ENCODE measurements at regions of chr17 and their contacts with region 1.

Region 1: DNA sequence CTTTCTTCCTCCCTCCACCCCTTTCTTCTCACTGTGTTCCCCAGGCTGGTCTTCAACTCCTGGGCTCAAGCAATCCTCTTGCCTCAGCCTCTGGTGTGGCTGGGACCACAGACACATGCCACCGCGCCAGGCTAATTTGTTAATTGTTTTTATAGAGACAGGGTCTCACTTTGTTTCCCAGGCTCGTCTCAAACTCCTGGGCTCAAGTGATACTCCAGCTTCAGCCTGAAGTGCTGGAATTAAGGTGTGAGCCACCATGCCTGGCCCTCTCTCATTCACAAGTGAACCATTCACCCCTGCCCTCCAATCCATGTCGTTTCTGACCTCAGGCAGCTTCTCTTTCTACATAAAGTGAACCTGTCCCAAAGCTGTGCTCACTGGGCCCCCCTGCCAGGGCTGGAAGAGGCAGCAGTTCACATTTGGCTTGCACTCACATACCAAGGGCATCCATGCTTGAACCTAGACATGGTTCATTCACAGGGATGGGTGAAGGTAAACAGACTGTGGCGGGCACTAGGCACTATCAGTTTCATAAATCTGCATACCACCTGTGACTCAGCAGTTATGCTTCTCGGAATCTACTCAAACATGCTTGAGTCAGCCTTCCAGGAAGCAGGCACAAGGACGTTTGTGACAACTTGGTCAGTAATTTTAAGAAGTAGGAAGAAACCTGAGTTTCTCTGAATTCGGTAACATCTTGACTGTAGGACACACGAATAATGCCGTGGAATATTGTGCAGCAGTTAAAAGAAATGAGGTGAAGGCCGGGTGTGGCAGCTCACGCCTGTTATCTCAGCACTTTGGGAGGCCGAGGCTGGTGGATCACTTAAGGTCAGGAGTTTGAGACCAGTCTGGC is 6.0 kb upstream of the RNF213 start:
- DNase-seq: peak; percentile 83 to 96
- H3K4me3 ChIP-seq: peak overlapping the region; percentile 38; the same call in 1 of the 2 replicates
- H3K27ac ChIP-seq: peak overlapping the region; percentile 94
- H3K4me1 ChIP-seq: peaks cover 41% of the 10 kb centered on the region
- H3K27me3 ChIP-seq: no peaks in the 10 kb centered on the region
- CTCF ChIP-seq: no peak

Region 2: DNA sequence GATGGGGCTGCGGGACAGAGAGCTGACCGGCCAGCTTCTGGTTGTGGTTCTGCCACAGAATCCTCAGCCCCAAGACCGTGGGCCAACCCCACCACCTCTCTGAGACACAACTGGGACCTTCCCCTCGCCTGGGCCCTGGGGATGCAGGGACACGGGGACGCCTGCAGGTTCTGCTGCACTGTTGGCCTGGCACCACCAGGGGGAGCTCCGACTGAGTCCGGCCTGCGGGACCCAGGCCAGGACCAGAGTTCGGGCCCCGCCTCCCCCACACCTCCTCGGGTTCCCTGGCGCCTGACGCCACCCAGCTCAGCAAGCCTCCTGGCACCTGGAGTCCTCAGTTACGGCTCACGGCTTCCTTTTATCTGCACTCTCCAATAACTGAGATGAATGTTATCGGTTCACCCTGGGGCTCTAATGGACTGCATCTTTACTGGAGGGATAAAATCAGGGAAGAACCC is 246.2 kb before region 1 on chr17:
- CTCF ChIA-PET with region 1: no interaction called
- POLR2A ChIA-PET with region 1: no interaction called
- intact Hi-C with region 1: loop called (anchors 5 kb)
- DNase-seq: peak; percentile 40 to 83
- H3K4me3 ChIP-seq: no peak overlapping the region
- H3K27ac ChIP-seq: no peak overlapping the region
- H3K4me1 ChIP-seq: no peaks in the 10 kb centered on the region
- H3K27me3 ChIP-seq: no peaks in the 10 kb centered on the region
- CTCF ChIP-seq: peak; percentile 86

Region 3: GRCh38 chr17:80082403-80083135 is 172.1 kb before region 1 on chr17:
- CTCF ChIA-PET with region 1: no interaction called
- POLR2A ChIA-PET with region 1: no interaction called
- intact Hi-C with region 1: loop called (anchors 2 kb)
- DNase-seq: peak in 1 of 2 experiments; percentile 65
- H3K4me3 ChIP-seq: no peak overlapping the region
- H3K27ac ChIP-seq: no peak overlapping the region
- H3K4me1 ChIP-seq: no peaks in the 10 kb centered on the region
- H3K27me3 ChIP-seq: peaks cover 10% of the 10 kb centered on the region; the same call in 1 of the 2 replicates
- CTCF ChIP-seq: peak; percentile 78

Region 4: DNA sequence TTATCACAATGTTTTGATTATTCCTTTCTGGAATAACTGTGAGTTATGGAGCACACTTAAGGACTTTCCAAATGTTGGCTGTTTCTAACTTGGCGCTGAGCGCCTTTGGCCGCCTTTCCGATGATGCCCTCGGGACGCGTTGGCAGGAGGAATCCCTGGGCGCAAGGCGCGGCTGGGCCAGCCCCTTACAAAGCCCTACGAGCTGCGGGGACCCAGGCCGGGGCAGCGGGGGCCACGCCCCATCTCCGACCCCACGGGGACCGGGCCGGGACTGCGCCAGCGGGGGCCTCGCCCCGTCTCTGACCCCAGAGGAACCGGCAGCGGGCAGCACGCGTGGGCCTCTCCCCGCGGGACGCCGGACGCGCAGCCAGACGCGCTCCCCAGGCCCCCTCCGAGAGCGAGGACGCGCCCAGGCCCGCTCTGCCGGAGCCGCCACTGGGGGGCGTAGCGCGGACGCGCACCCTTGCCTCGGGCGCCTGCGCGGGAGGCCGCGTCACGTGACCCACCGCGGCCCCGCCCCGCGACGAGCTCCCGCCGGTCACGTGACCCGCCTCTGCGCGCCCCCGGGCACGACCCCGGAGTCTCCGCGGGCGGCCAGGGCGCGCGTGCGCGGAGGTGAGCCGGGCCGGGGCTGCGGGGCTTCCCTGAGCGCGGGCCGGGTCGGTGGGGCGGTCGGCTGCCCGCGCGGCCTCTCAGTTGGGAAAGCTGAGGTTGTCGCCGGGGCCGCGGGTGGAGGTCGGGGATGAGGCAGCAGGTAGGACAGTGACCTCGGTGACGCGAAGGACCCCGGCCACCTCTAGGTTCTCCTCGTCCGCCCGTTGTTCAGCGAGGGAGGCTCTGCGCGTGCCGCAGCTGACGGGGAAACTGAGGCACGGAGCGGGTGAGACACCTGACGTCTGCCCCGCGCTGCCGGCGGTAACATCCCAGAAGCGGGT is 153.3 kb before region 1 on chr17 and contains the start of gene GAA:
- CTCF ChIA-PET with region 1: no interaction called
- POLR2A ChIA-PET with region 1: no interaction called
- intact Hi-C with region 1: loop called (anchors 1 kb)
- DNase-seq: peak; percentile 36 to 89
- H3K4me3 ChIP-seq: peak within 1 kb of the TSS; percentile 82
- H3K27ac ChIP-seq: no peak within 1 kb of the TSS
- H3K4me1 ChIP-seq: no peaks in the 10 kb centered on the region
- H3K27me3 ChIP-seq: no peaks in the 10 kb centered on the region
- CTCF ChIP-seq: peak; percentile 61; the same call in 1 of the 2 replicates
- total RNA-seq, gene GAA: 86.9 and 126 TPM in 2 replicates

Region 5: DNA sequence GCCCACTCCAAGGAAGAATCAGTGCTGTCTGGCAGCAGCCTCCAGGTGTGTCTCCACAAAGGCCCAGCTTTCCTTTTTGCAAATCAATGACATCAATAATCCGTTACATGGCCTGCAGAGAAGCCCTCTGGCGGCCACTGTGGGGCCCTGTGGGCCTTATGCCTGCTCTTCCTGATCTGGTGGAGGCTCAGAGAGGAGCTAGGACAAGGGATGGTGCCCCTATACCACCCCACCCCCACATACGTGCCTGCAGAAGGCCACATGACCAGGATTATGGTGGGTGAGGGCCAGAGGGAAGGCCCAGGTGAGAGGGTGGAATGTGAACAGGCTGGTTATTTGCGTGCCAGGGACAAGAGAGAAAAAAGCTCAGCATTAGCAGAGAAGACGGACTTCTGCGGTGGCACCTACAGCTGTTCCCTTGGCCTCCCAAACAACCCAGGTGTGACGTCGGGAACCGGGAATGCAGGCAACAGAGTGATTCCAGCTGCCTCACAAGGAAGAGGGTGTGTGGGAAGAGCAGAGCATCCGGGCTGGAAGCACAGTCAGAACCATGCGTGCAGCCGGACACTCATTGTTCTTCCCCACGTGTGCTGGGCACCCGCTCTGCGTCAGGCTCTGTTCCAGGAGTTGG is 130.2 kb before region 1 on chr17:
- CTCF ChIA-PET with region 1: no interaction called
- POLR2A ChIA-PET with region 1: no interaction called
- intact Hi-C with region 1: loop called (anchors 2 kb)
- DNase-seq: peak; percentile 41 to 89
- H3K4me3 ChIP-seq: no peak overlapping the region
- H3K27ac ChIP-seq: no peak overlapping the region
- H3K4me1 ChIP-seq: no peaks in the 10 kb centered on the region
- H3K27me3 ChIP-seq: no peaks in the 10 kb centered on the region
- CTCF ChIP-seq: 0 out of 2 replicates have a peak, but pooled peaks have one; percentile 48

Region 6: GRCh38 chr17:80147035-80147836 is 107.4 kb before region 1 on chr17 and contains the start of gene EIF4A3:
- CTCF ChIA-PET with region 1: interaction called, 4 read pairs
- POLR2A ChIA-PET with region 1: no interaction called
- intact Hi-C with region 1: loop called (anchors 5 kb)
- DNase-seq: peak; percentile 91 to 97
- H3K4me3 ChIP-seq: peak within 1 kb of the TSS; percentile 88
- H3K27ac ChIP-seq: peak within 1 kb of the TSS; percentile 55
- H3K4me1 ChIP-seq: peaks cover 30% of the 10 kb centered on the region
- H3K27me3 ChIP-seq: no peaks in the 10 kb centered on the region
- CTCF ChIP-seq: no peak
- total RNA-seq, gene EIF4A3: 114 and 125 TPM in 2 replicates

Region 7: GRCh38 chr17:80219013-80219762 is 35.4 kb before region 1 on chr17:
- CTCF ChIA-PET with region 1: no interaction called
- POLR2A ChIA-PET with region 1: no interaction called
- intact Hi-C with region 1: loop called (anchors 1 kb)
- DNase-seq: peak; percentile 58 to 81
- H3K4me3 ChIP-seq: peak overlapping the region; percentile 71
- H3K27ac ChIP-seq: no peak overlapping the region
- H3K4me1 ChIP-seq: peaks cover 6% of the 10 kb centered on the region; the same call in 1 of the 2 replicates
- H3K27me3 ChIP-seq: no peaks in the 10 kb centered on the region
- CTCF ChIP-seq: no peak

Region 8: DNA sequence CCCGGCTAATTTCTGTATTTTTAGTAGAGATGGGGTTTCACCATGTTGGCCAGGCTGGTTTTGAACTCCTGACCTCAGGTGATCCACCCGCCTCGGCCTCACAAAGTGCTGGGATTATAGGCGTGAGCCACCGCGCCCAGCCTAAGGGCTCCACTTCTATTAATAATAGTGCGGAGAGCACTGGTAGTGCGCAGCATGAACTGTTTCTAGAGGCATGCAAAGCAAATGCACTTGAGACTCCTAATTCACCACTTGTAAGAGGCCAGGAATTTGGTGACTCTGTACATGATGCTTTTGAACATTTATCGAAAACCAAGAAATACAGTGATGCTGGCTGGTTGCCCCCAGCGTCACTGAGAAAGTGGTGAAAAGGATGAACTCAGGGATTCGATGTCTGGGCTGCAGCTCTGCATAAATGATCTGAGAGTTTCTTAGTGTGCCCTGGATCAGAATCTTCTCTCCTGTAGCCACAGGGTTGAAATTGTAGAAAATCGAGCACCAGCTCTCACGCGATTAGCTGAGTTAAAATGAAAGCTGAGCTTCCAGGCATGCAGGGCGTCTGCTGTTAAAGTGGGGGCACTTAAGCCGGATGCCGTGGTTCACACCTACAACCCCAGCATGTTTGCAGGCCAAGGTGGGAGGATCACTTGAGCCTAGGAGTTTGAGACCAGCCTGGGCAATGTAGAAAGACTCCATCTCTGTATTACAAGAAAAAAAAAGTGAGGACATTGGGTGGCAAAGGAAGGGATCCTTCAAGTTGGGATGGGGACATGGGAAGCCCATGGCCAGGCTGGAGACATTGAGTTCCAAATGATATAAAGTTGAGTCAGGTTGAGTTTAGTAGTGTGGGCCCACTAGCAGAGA is 10.8 kb after region 1 on chr17:
- CTCF ChIA-PET with region 1: no interaction called
- POLR2A ChIA-PET with region 1: no interaction called
- intact Hi-C with region 1: no loop called
- DNase-seq: no peak
- H3K4me3 ChIP-seq: no peak overlapping the region
- H3K27ac ChIP-seq: no peak overlapping the region
- H3K4me1 ChIP-seq: no peaks in the 10 kb centered on the region
- H3K27me3 ChIP-seq: no peaks in the 10 kb centered on the region
- CTCF ChIP-seq: no peak